ENCODE measurements at regions of chr4 and their contacts with region 1.

Region 1: GRCh38 chr4:10116580-10117358 is at the start of gene WDR1:
- DNase-seq: peak; percentile 95
- H3K4me3 Mint-ChIP-seq: peak within 1 kb of the TSS; percentile 90
- H3K27ac Mint-ChIP-seq: peak within 1 kb of the TSS; percentile 99
- H3K4me1 Mint-ChIP-seq: peaks cover 22% of the 10 kb centered on the region
- H3K27me3 Mint-ChIP-seq: no peaks in the 10 kb centered on the region
- CTCF ChIP-seq: no peak
- total RNA-seq, gene WDR1: 240 and 246 TPM in 2 replicates

Region 2: GRCh38 chr4:9691238-9692065 is 425.3 kb before region 1 on chr4:
- CTCF ChIA-PET with region 1: no interaction called
- POLR2A ChIA-PET with region 1: interaction called, 4 read pairs
- intact Hi-C with region 1: loop called (anchors 5 kb)
- DNase-seq: peak; percentile 93
- H3K4me3 Mint-ChIP-seq: peak overlapping the region; percentile 79
- H3K27ac Mint-ChIP-seq: peak overlapping the region; percentile 81
- H3K4me1 Mint-ChIP-seq: no peaks in the 10 kb centered on the region
- H3K27me3 Mint-ChIP-seq: no peaks in the 10 kb centered on the region
- CTCF ChIP-seq: no peak

Region 3: GRCh38 chr4:10006231-10006600 is 110.6 kb before region 1 on chr4:
- CTCF ChIA-PET with region 1: no interaction called
- POLR2A ChIA-PET with region 1: interaction called, 6 read pairs
- intact Hi-C with region 1: loop called (anchors 5 kb)
- DNase-seq: peak; percentile 96
- H3K4me3 Mint-ChIP-seq: peak overlapping the region; percentile 55
- H3K27ac Mint-ChIP-seq: peak overlapping the region; percentile 82
- H3K4me1 Mint-ChIP-seq: peaks cover 44% of the 10 kb centered on the region
- H3K27me3 Mint-ChIP-seq: no peaks in the 10 kb centered on the region
- CTCF ChIP-seq: no peak

Region 4: GRCh38 chr4:10074767-10075105 is 42.0 kb before region 1 on chr4:
- CTCF ChIA-PET with region 1: no interaction called
- POLR2A ChIA-PET with region 1: no interaction called
- intact Hi-C with region 1: loop called (anchors 1 kb)
- DNase-seq: peak; percentile 68
- H3K4me3 Mint-ChIP-seq: no peak overlapping the region
- H3K27ac Mint-ChIP-seq: no peak overlapping the region
- H3K4me1 Mint-ChIP-seq: no peaks in the 10 kb centered on the region
- H3K27me3 Mint-ChIP-seq: no peaks in the 10 kb centered on the region
- CTCF ChIP-seq: peak; percentile 39

Region 5: GRCh38 chr4:10096201-10096977 is 20.4 kb before region 1 on chr4:
- CTCF ChIA-PET with region 1: interaction called, 4 read pairs
- POLR2A ChIA-PET with region 1: interaction called, 21 read pairs
- intact Hi-C with region 1: no loop called
- DNase-seq: peak; percentile 94
- H3K4me3 Mint-ChIP-seq: peak overlapping the region; percentile 33
- H3K27ac Mint-ChIP-seq: peak overlapping the region; percentile 41
- H3K4me1 Mint-ChIP-seq: peaks cover 33% of the 10 kb centered on the region
- H3K27me3 Mint-ChIP-seq: no peaks in the 10 kb centered on the region
- CTCF ChIP-seq: no peak

Region 6: DNA sequence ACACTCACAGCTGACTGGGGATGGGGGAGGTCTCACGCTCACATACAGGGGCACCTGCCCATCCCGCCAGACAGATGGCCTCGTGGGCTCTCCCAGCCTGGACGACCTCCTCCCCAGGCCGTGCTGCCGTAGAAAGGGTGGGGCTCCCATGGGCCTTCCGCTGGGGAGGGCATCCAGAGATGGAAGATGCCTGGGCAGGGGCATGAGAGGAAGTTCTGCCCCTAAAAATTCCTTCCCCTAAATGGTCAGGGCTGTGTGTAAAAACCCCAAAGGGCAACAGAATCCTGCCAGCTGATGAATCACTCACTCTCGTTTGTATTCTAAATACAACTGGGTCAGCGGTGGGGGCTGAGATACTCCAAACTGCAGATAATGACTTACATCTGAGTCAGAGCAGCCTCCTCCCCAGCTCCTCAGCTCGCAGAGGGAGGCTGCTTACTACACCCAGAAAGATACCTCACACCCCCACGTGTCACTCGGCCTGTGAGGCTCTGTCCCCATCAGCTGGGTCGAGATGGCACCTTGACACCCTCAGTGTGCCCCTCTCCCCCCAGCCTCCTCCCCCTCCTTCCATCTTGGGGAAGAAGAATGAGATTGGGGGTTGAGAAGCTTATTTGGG is 10.2 kb before region 1 on chr4:
- CTCF ChIA-PET with region 1: interaction called, 5 read pairs
- POLR2A ChIA-PET with region 1: interaction called, 38 read pairs
- intact Hi-C with region 1: no loop called
- DNase-seq: peak; percentile 97
- H3K4me3 Mint-ChIP-seq: peak overlapping the region; percentile 44
- H3K27ac Mint-ChIP-seq: peak overlapping the region; percentile 90
- H3K4me1 Mint-ChIP-seq: peaks cover 44% of the 10 kb centered on the region
- H3K27me3 Mint-ChIP-seq: no peaks in the 10 kb centered on the region
- CTCF ChIP-seq: no peak

Region 7: DNA sequence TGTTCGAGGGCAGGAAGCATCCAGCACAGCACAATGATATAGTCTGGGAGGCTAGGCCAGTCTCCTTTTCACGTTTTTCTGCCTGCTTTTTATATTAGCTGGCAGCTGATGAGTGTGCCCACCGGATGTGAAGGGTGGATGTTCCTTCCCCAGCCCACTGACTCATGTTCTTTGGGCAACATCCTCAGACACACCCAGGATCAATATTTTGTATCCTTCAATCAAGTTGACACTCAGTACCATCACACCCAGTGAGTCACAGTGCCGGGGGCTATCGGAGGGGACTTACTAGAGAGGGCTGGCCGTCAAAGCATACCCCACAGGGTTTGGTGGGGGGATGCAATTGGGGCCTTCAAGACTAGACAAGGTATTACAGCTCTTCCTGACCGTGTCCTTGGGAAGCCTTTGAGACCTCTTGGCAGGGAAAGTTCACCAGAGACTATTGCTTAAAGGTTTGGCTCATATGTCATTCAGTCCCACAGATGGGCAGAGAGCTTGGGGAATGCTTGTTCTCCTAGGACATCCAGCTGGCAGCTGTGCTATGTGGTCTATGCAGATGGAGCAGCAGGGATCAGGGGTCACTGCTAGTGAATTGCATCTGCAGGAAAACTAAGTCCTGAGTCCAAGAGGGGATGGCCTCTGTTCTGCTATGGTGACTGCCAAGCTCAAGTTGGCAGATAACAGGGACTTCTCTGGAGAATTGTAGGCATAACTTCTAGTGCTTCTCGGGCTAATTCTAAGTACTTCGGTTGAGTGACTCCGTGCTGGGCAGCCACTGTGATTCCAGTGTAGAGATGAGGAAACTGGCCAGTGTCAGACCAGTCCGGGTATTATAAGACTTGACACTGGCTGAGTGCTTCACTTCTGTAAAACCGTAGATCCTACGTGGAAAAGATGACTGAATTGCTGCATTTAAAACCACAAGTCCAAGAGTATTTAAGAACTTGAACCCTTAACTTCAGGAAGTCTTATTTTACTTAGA is 12.7 kb after region 1 on chr4:
- CTCF ChIA-PET with region 1: interaction called, 3 read pairs
- POLR2A ChIA-PET with region 1: interaction called, 18 read pairs
- intact Hi-C with region 1: no loop called
- DNase-seq: peak; percentile 44
- H3K4me3 Mint-ChIP-seq: no peak overlapping the region
- H3K27ac Mint-ChIP-seq: no peak overlapping the region
- H3K4me1 Mint-ChIP-seq: peaks cover 17% of the 10 kb centered on the region
- H3K27me3 Mint-ChIP-seq: no peaks in the 10 kb centered on the region
- CTCF ChIP-seq: no peak

Region 8: DNA sequence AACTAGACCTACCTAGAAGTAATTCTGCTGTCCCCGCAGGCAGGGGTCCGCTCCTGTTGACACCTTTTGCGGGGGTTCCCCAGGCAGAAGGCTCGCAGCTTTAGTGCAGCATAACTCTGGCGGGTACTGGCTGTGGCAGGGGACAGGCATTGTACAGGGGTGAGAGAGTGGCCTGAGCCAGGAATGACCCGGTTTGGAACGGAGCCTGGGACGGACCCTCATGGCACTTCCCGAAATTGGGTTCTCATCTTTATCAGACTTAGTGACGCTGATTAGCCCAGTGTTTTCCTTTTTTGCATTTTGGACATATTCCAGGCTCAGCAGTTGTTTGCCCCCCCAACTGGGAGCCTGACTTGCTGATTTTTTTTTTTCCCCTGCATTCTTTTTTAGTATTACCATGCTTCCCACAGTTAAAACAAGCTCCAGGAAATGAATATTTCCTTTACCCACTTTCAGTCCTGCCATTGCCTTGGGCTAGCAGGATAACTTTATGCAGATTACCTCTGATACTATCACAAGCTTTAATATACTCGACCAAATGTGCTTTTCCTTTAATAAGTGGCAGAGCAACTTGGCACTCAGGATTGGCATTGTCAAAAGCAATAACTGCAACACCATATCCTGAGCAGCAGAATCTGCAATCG is 55.6 kb after region 1 on chr4:
- CTCF ChIA-PET with region 1: no interaction called
- POLR2A ChIA-PET with region 1: no interaction called
- intact Hi-C with region 1: no loop called
- DNase-seq: no peak
- H3K4me3 Mint-ChIP-seq: no peak overlapping the region
- H3K27ac Mint-ChIP-seq: no peak overlapping the region
- H3K4me1 Mint-ChIP-seq: no peaks in the 10 kb centered on the region
- H3K27me3 Mint-ChIP-seq: no peaks in the 10 kb centered on the region
- CTCF ChIP-seq: no peak